T-cell (primary cell): ENCODE measurements at regions of chr1 and their contacts with region 1.

Region 1: DNA sequence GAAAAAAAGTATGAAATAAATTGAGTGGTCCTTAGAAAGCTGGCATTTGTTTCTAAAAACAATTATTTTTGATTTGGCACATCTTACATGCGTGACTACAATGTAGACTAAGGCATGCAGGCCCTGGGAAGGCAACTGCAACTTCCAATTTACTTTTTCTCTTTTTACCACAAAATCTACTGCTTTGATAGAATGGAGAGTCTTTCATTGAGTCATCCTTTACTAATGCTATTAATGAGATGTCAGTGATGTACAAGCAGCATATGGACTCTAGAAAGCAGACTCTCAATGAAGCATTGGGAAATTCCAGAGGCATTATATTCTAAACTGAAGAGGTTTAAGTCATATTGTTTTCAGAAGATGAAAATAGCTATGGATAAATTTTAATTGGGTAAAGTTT is 29.6 kb upstream of the PRRX1 start:
- DNase-seq: no peak
- ATAC-seq: no peak
- H3K4me3 ChIP-seq: no peak overlapping the region
- H3K4me3 Mint-ChIP-seq: no peak overlapping the region
- H3K27ac ChIP-seq: no peak overlapping the region
- H3K27ac Mint-ChIP-seq: no peak overlapping the region
- H3K4me1 ChIP-seq: no peaks in the 10 kb centered on the region
- H3K4me1 Mint-ChIP-seq: no peaks in the 10 kb centered on the region
- H3K27me3 ChIP-seq: peaks cover 0 to 12% of the 10 kb centered on the region in 2 experiments
- H3K27me3 Mint-ChIP-seq: peaks cover 13 to 18% of the 10 kb centered on the region in 2 donors

Region 2: DNA sequence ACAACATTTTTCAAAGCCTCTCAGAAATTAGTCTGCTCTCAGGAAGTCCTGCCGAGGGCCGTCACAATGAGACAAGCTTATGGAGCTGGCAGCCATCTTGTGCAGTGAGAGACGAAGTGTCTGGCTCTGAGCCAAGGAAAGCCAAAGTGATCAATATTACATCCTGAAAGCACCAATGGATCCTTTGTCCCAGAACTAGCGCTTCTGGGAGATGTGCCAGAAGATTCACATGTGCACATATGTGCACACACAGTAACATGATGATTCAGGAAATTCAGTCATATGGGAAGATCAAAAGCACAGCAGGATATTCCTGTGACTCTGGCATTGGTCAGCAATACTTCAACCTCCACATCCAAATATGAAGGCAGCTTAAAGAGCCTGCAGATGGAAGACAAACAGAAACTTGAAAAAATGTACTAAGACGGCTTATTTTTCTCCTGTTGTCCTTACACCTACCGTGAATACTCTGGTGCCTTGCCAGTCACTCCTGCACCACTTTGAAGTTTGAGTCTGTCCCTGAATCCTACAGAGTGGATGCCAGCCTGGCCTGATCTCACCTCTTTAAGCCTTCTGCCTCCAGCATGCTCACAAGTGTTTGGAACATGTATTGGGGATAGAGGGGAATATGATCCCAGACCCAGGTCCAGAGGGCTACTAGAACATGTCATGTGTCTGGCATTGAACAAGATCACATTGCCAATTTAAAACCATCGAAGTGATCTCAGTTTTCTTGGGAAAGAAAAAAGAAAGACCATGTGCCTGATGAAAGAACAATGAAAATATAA is 14.9 kb before region 1 on chr1:
- CTCF ChIA-PET with region 1: no interaction called
- POLR2A ChIA-PET with region 1: no interaction called
- DNase-seq: no peak
- ATAC-seq: no peak
- H3K4me3 ChIP-seq: no peak overlapping the region
- H3K4me3 Mint-ChIP-seq: no peak overlapping the region
- H3K27ac ChIP-seq: no peak overlapping the region
- H3K27ac Mint-ChIP-seq: no peak overlapping the region
- H3K4me1 ChIP-seq: no peaks in the 10 kb centered on the region
- H3K4me1 Mint-ChIP-seq: no peaks in the 10 kb centered on the region
- H3K27me3 ChIP-seq: peaks cover 0 to 2% of the 10 kb centered on the region in 2 experiments
- H3K27me3 Mint-ChIP-seq: peaks cover 4 to 15% of the 10 kb centered on the region in 2 donors

Region 3: DNA sequence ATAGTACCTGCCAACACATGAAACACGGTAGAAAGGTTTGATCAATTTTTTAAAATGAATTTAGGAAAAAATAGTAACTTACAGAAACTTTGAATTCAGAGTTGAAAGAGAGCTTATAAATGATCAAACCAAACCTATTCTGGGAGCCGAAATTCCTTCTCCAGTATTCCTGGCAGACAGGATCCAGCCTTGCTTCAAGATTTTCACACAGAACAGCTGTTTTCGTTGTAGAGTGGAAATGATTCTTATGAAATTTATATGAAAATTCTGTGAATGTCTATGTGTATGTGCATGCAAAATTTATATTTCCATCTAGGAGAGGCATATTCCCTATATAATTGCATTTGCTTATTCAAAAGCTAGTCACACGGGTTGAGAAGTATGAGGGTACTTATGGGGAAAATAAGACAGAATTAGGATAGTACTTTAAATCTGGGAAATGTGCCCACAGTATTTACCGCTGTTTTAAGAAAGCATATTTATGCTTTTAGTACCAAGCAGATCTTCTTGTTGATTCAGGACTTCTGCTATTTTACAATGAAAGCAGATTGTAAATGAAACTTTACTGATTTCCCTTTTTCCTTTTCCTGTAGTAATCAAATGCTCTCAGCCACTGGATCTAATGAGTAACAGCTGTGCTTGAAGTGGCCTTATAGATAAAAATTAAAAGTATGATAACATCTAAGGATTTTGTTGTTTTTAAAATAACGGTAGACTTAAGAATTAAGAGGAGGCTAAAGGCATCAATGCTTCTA is 60.1 kb after region 1 on chr1:
- CTCF ChIA-PET with region 1: no interaction called
- POLR2A ChIA-PET with region 1: interaction called in 1 of 2 experiments, 11 read pairs
- DNase-seq: no peak
- ATAC-seq: no peak
- H3K4me3 ChIP-seq: no peak overlapping the region
- H3K4me3 Mint-ChIP-seq: no peak overlapping the region
- H3K27ac ChIP-seq: no peak overlapping the region
- H3K27ac Mint-ChIP-seq: no peak overlapping the region
- H3K4me1 ChIP-seq: no peaks in the 10 kb centered on the region
- H3K4me1 Mint-ChIP-seq: no peaks in the 10 kb centered on the region
- H3K27me3 ChIP-seq: no peaks in the 10 kb centered on the region
- H3K27me3 Mint-ChIP-seq: peaks cover 15 to 42% of the 10 kb centered on the region in 2 donors